ENCODE measurements at regions of chr16 and their contacts with region 1.

Region 1: DNA sequence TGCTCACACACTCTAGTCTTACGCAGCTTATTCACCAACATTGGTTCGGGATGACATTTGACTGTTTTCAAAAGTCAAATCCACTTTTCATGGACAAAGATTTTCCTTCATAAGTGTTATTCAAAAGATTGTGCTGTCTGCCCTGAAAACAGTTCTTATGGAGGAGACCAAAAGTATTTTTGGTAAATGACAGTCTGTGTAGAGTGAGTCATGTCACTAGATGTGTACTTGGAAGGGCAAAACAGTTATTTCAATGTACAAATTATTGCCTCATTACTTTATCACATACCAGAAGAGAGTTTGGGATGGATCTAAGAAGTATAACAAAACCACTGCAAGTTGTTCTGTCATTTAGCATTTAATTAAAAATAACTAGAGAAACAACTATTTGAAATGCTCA is 265.6 kb downstream of the CDH13 start:
- DNase-seq: no peak
- H3K4me3 ChIP-seq: no peak overlapping the region
- H3K27ac ChIP-seq: no peak overlapping the region
- H3K27me3 ChIP-seq: no peaks in the 10 kb centered on the region
- CTCF ChIP-seq: no peak

Region 2: DNA sequence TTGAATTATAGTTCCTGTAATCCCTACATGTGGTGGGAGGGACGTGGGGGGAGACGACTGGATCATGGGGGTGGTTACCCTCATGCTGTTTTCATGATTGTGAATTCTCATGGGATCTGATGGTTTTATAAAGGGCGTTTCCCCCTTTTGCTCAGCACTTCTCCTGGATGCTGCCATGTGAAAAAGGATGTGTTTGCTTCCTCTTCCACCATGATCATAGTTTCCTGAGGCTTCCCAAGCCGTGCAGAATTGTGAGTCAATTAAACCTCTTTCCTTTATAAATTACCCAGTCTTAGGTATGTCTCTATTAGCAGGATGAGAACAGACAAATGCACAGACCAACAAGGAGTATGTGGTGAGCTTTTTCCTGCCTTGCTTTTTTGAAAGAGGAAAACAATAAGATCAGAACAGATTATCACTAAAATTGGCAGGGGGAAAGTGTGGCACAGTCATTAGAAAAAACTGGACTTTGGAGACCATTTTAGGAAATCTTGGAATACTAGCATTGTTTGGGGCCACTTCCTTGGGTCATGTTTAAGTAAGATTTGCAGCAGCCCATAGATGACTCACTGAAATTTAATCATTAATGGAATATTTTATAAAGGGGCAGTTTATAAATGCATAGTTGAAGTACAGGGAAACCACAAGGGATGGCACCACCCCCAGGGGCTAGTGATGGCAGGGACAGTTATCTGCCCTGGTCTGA is 87.2 kb after region 1 on chr16:
- CTCF ChIA-PET with region 1: no interaction called
- POLR2A ChIA-PET with region 1: no interaction called
- DNase-seq: no peak
- H3K4me3 ChIP-seq: no peak overlapping the region
- H3K27ac ChIP-seq: no peak overlapping the region
- H3K27me3 ChIP-seq: no peaks in the 10 kb centered on the region
- CTCF ChIP-seq: no peak

Region 3: DNA sequence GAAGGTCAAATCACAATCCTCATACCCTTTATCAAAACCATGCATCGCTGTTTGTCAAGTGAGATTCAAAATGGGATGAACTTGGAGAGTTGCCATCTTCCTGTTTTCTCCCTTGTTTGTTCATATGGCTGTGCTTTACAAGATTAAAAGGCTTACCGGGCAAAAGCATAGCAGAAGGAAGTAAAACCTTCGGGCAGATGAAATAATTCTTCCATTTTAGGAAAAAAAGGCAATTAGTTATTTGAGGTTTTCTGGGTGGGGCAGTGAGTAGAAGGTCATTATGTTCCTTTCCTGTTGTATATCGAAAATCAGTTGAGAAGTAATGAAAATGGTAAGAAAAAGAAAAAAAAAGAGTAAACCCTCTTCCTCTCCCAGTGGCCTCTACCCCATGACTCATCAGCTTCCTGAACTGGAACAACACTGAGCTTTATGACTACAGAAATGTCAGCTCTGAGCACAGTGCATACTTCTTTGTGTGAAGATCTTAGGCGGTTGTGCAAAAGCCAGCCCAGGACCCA is 103.7 kb after region 1 on chr16:
- CTCF ChIA-PET with region 1: interaction called, 7 read pairs
- POLR2A ChIA-PET with region 1: interaction called, 10 read pairs
- DNase-seq: peak; percentile 32
- H3K4me3 ChIP-seq: no peak overlapping the region
- H3K27ac ChIP-seq: no peak overlapping the region
- H3K27me3 ChIP-seq: no peaks in the 10 kb centered on the region
- CTCF ChIP-seq: no peak

Region 4: GRCh38 chr16:83356266-83356665 is 463.9 kb after region 1 on chr16:
- CTCF ChIA-PET with region 1: no interaction called
- POLR2A ChIA-PET with region 1: no interaction called
- DNase-seq: peak; percentile 7
- H3K4me3 ChIP-seq: no peak overlapping the region
- H3K27ac ChIP-seq: no peak overlapping the region
- H3K27me3 ChIP-seq: no peaks in the 10 kb centered on the region
- CTCF ChIP-seq: peak; percentile 81

Measured in AG04450 (cell line).